SK-N-SH (cell line): ENCODE measurements at regions of chr4 and their contacts with region 1.

Region 1: DNA sequence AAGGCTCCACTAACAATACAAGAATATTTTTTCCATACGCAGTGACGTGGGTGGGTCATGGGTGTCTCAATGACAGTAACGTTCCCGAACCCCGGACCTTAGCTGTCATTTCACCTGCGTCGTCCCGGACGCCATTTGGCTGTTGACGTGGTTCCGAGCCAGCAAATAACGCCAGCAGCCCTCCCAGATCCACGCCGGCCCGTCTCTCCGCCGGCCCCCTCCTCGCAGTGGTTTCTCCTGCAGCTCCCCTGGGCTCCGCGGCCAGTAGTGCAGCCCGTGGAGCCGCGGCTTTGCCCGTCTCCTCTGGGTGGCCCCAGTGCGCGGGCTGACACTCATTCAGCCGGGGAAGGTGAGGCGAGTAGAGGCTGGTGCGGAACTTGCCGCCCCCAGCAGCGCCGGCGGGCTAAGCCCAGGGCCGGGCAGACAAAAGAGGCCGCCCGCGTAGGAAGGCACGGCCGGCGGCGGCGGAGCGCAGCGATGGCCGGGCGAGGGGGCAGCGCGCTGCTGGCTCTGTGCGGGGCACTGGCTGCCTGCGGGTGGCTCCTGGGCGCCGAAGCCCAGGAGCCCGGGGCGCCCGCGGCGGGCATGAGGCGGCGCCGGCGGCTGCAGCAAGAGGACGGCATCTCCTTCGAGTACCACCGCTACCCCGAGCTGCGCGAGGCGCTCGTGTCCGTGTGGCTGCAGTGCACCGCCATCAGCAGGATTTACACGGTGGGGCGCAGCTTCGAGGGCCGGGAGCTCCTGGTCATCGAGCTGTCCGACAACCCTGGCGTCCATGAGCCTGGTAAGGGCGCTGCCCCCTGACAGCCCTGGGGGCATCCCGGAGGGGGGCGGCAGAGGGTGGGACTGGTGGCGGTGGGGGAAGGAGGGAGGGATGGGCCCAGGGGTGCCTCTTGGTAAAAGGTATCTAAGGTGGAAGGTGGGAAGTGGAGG is at the start of gene CPE:
- DNase-seq: peak; percentile 95
- H3K4me3 ChIP-seq: peak within 1 kb of the TSS; percentile 63 to 72
- H3K27ac ChIP-seq: peak within 1 kb of the TSS in 1 of 2 experiments; percentile 86; a peak in 2 of 4 replicates
- H3K4me1 ChIP-seq: peaks cover 0 to 14% of the 10 kb centered on the region in 2 experiments; a peak in 2 of 4 replicates
- H3K27me3 ChIP-seq: no peaks in the 10 kb centered on the region; the same call in 1 of the 2 replicates
- CTCF ChIP-seq: peak; percentile 38; the same call in 1 of the 2 replicates
- EP300 ChIP-seq: no peak
- RAD21 ChIP-seq: peak; percentile 51
- polyA plus RNA-seq, gene CPE: 18.2 and 25.9 TPM in 2 replicates

Region 2: GRCh38 chr4:165060942-165061341 is 318.1 kb before region 1 on chr4:
- CTCF ChIA-PET with region 1: no interaction called
- POLR2A ChIA-PET with region 1: no interaction called
- DNase-seq: no peak
- H3K4me3 ChIP-seq: no peak overlapping the region
- H3K27ac ChIP-seq: no peak overlapping the region
- H3K4me1 ChIP-seq: no peaks in the 10 kb centered on the region; a peak in 1 of 4 replicates
- H3K27me3 ChIP-seq: no peaks in the 10 kb centered on the region; the same call in 1 of the 2 replicates
- CTCF ChIP-seq: peak; percentile 40
- EP300 ChIP-seq: no peak
- RAD21 ChIP-seq: no peak

Region 3: GRCh38 chr4:165079476-165079875 is 299.5 kb before region 1 on chr4:
- CTCF ChIA-PET with region 1: no interaction called
- POLR2A ChIA-PET with region 1: no interaction called
- DNase-seq: no peak
- H3K4me3 ChIP-seq: no peak overlapping the region
- H3K27ac ChIP-seq: no peak overlapping the region
- H3K4me1 ChIP-seq: no peaks in the 10 kb centered on the region
- H3K27me3 ChIP-seq: no peaks in the 10 kb centered on the region
- CTCF ChIP-seq: no peak
- EP300 ChIP-seq: no peak
- RAD21 ChIP-seq: no peak

Region 4: DNA sequence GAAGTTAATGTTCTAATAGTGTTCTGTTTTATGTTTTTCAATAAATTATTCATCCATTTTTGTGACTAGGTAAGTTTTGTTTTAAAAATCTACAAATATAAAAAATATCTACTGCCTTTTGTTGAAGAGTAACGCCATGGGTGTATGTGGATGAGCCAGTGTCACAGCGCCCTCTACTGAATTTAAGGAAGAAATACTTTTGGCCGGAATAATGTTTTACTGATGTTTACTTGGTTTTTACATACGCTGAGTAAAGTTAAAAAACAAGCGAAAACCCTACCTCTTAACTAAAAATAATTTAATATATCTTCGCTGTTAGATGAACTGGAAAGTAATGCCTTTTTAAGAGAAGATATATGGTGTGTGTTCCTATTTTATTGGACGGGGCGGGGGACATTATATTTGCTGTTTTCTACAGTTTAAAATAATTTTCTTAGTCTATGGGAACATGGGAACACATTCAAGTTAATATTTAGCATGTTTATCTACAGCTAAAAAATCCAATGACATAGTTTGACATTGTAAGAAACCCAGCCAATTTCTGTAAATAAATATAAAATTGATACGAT is 85.9 kb after region 1 on chr4:
- CTCF ChIA-PET with region 1: interaction called, 10 read pairs
- POLR2A ChIA-PET with region 1: no interaction called
- DNase-seq: peak; percentile 54
- H3K4me3 ChIP-seq: peak overlapping the region in 1 of 2 experiments; percentile 12; a peak in 1 of 4 replicates
- H3K27ac ChIP-seq: no peak overlapping the region
- H3K4me1 ChIP-seq: peaks cover 0 to 3% of the 10 kb centered on the region in 2 experiments; a peak in 1 of 4 replicates
- H3K27me3 ChIP-seq: no peaks in the 10 kb centered on the region; the same call in 1 of the 2 replicates
- CTCF ChIP-seq: peak; percentile 90
- EP300 ChIP-seq: no peak
- RAD21 ChIP-seq: peak; percentile 96

Region 5: GRCh38 chr4:165553221-165553810 is 174.3 kb after region 1 on chr4:
- CTCF ChIA-PET with region 1: no interaction called
- POLR2A ChIA-PET with region 1: no interaction called
- DNase-seq: no peak
- H3K4me3 ChIP-seq: no peak overlapping the region
- H3K27ac ChIP-seq: no peak overlapping the region
- H3K4me1 ChIP-seq: no peaks in the 10 kb centered on the region
- H3K27me3 ChIP-seq: no peaks in the 10 kb centered on the region
- CTCF ChIP-seq: no peak
- EP300 ChIP-seq: no peak
- RAD21 ChIP-seq: no peak